ENCODE measurements at regions of chr3 and their contacts with region 1.

Region 1: GRCh38 chr3:149969940-149970715 is 567 bp downstream of the PFN2 start:
- DNase-seq: peak; percentile 84 to 92 (median 90)
- H3K4me3 ChIP-seq: peak overlapping the region; percentile 57
- H3K27ac ChIP-seq: peak overlapping the region; percentile 94 to 95
- H3K4me1 ChIP-seq: peaks cover 3% of the 10 kb centered on the region
- H3K27me3 ChIP-seq: no peaks in the 10 kb centered on the region
- CTCF ChIP-seq: no peak
- EP300 ChIP-seq: no peak
- POLR2A ChIP-seq: no peak

Region 2: GRCh38 chr3:149738876-149739275 is 231.3 kb before region 1 on chr3:
- intact Hi-C with region 1: no loop called
- DNase-seq: no peak
- H3K4me3 ChIP-seq: no peak overlapping the region
- H3K27ac ChIP-seq: no peak overlapping the region
- H3K4me1 ChIP-seq: no peaks in the 10 kb centered on the region
- H3K27me3 ChIP-seq: no peaks in the 10 kb centered on the region
- CTCF ChIP-seq: no peak
- EP300 ChIP-seq: no peak
- POLR2A ChIP-seq: no peak

Region 3: GRCh38 chr3:150000641-150001040 is 30.5 kb after region 1 on chr3:
- intact Hi-C with region 1: no loop called
- DNase-seq: no peak
- H3K4me3 ChIP-seq: no peak overlapping the region
- H3K27ac ChIP-seq: no peak overlapping the region
- H3K4me1 ChIP-seq: no peaks in the 10 kb centered on the region
- H3K27me3 ChIP-seq: no peaks in the 10 kb centered on the region
- CTCF ChIP-seq: no peak
- EP300 ChIP-seq: no peak
- POLR2A ChIP-seq: no peak

Region 4: DNA sequence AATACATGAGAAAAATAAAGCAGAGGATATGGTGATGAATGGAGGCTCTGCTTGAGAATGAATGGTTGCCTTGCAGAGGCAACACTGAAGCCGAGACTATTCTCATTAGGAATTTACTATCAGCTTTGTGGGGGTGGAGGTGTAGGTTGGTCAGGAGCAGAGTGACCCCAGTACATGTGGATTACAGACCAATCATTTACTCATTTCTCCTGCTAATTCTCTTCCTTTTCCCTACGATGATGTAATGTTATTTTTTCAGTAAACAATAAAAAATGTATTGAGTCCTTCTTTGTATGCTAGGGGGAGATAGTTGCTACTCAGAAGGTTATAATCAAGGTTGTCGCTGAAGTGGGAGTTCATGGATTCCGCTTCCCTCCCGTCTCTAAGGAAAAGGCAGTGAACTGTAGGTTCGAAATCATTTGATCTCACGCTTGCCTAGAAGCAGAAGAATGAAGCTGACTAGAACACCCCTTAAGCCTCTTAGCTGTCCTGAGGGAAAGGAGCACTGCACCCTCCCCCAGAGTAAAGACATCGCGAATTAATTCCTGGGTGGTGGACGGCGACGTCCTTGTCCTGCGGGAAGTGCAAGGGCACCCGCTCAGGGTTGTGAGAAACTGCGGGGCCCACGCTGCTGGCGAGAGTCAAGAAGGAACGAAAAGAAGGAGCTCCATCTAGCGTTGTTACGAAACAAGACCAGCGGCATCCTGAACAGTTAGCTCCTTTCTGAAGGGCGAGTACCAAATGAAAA is 213.7 kb after region 1 on chr3:
- intact Hi-C with region 1: loop called (anchors 5 to 10 kb)
- DNase-seq: peak; percentile 49 to 69 (median 65)
- H3K4me3 ChIP-seq: peak overlapping the region; percentile 25
- H3K27ac ChIP-seq: no peak overlapping the region
- H3K4me1 ChIP-seq: no peaks in the 10 kb centered on the region
- H3K27me3 ChIP-seq: no peaks in the 10 kb centered on the region
- CTCF ChIP-seq: peak; percentile 23 to 45 (median 41)
- EP300 ChIP-seq: no peak
- POLR2A ChIP-seq: no peak

Region 5: DNA sequence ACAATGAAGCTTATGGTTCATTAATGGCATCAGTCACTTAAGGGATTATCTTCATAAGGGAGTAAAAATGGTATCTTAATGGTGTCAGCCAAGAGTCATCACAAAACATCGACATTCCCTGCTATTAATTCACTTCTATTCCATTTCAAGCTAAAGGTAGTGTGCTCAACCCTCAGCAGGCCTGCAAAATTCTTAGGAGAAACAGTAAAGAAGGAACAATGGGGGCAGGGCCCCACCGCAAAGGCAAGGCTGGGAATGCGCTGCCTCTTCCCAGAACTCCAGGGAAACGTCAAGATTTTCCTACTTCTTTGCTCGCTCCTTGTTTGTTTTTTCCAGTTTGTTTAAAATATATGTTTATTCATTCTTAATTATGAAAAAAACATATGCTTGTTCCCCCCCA is 250.7 kb after region 1 on chr3:
- intact Hi-C with region 1: loop called in 2 of 4 experiments (anchors 2 to 5 kb)
- DNase-seq: no peak
- H3K4me3 ChIP-seq: peak overlapping the region; percentile 27
- H3K27ac ChIP-seq: no peak overlapping the region
- H3K4me1 ChIP-seq: peaks cover 5% of the 10 kb centered on the region
- H3K27me3 ChIP-seq: no peaks in the 10 kb centered on the region
- CTCF ChIP-seq: no peak
- EP300 ChIP-seq: no peak
- POLR2A ChIP-seq: no peak

Region 6: GRCh38 chr3:150408221-150409102 is 438.3 kb after region 1 on chr3 and contains the start of gene TSC22D2:
- intact Hi-C with region 1: loop called in 1 of 4 experiments (anchors 5 kb)
- DNase-seq: peak; percentile 97 to 99 (median 98)
- H3K4me3 ChIP-seq: peak within 1 kb of the TSS; percentile 78
- H3K27ac ChIP-seq: peak within 1 kb of the TSS; percentile 100
- H3K4me1 ChIP-seq: no peaks in the 10 kb centered on the region
- H3K27me3 ChIP-seq: no peaks in the 10 kb centered on the region
- CTCF ChIP-seq: peak in 1 of 3 donors; percentile 47
- EP300 ChIP-seq: peak; percentile 64
- POLR2A ChIP-seq: peak; percentile 98
- total RNA-seq, gene TSC22D2: 13.8 to 33.4 (median 28.0) TPM

Region 7: GRCh38 chr3:151795276-151795675 is 1825.1 kb after region 1 on chr3:
- intact Hi-C with region 1: no loop called
- DNase-seq: no peak
- H3K4me3 ChIP-seq: no peak overlapping the region
- H3K27ac ChIP-seq: no peak overlapping the region
- H3K4me1 ChIP-seq: no peaks in the 10 kb centered on the region
- H3K27me3 ChIP-seq: no peaks in the 10 kb centered on the region
- CTCF ChIP-seq: no peak
- EP300 ChIP-seq: no peak
- POLR2A ChIP-seq: no peak

Measured in ovary (tissue), 10 donors.